Naive thymus-derived CD4-positive, alpha-beta T cell (primary cell): ENCODE measurements at regions of chr13 and their contacts with region 1.

Region 1: DNA sequence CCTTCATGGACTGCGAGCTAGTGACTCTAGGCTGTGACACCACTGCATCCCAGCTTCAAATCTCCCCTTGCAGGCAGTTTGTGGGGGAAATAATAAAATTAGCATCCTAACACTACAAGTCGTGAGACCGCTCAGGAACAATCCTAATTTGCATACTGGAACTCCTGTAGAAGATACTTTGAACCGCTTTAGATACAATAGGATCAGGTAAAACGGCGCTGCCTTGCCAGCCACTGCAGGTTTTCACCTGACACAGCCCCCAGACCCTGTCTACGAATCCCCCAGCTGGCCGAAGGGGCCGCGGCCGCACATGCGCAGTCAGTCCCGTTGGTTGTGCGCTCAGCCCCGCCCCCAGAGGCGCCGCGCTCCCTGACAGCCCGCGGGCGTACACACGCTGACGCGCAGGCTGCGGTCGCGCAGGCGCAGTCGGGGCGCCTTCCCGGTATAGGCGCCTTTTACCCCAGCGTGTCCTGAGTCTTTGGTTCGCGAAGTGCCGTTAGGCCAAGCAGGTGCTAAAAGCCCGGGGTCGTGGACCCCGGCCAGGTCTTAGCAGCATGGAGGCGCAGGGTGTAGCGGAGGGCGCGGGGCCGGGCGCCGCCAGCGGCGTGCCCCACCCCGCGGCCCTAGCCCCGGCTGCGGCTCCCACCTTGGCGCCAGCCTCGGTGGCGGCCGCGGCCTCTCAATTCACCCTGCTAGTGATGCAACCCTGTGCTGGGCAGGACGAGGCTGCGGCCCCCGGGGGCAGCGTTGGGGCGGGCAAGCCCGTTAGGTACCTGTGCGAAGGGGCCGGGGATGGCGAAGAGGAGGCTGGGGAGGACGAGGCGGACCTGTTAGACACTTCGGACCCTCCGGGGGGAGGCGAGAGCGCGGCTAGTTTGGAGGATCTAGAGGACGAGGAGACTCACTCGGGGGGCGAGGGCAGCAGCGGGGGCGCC is at the start of gene RFXAP:
- DNase-seq: peak; percentile 84 to 95 (median 92)
- ATAC-seq: peak; percentile 96
- H3K4me3 ChIP-seq: peak within 1 kb of the TSS; percentile 86
- H3K4me3 Mint-ChIP-seq: peak within 1 kb of the TSS; percentile 90 to 98 (median 92)
- H3K27ac ChIP-seq: peak within 1 kb of the TSS; percentile 93
- H3K27ac Mint-ChIP-seq: peak within 1 kb of the TSS; percentile 70 to 96 (median 94)
- H3K4me1 ChIP-seq: peaks cover 11 to 12% of the 10 kb centered on the region in 2 donors
- H3K4me1 Mint-ChIP-seq: peaks cover 29 to 60% (median 54%) of the 10 kb centered on the region in 7 donors
- H3K27me3 ChIP-seq: no peaks in the 10 kb centered on the region
- H3K27me3 Mint-ChIP-seq: peaks cover 0 to 17% (median 6%) of the 10 kb centered on the region in 5 donors
- total RNA-seq, gene RFXAP: 4.9 to 12.7 (median 12.0) TPM

Region 2: GRCh38 chr13:35866801-35867200 is 952.3 kb before region 1 on chr13:
- CTCF ChIA-PET with region 1: no interaction called
- POLR2A ChIA-PET with region 1: no interaction called
- intact Hi-C with region 1: no loop called
- DNase-seq: no peak
- ATAC-seq: no peak
- H3K4me3 ChIP-seq: no peak overlapping the region
- H3K4me3 Mint-ChIP-seq: no peak overlapping the region
- H3K27ac ChIP-seq: no peak overlapping the region
- H3K27ac Mint-ChIP-seq: no peak overlapping the region
- H3K4me1 ChIP-seq: no peaks in the 10 kb centered on the region
- H3K4me1 Mint-ChIP-seq: no peaks in the 10 kb centered on the region
- H3K27me3 ChIP-seq: no peaks in the 10 kb centered on the region
- H3K27me3 Mint-ChIP-seq: no peaks in the 10 kb centered on the region

Region 3: DNA sequence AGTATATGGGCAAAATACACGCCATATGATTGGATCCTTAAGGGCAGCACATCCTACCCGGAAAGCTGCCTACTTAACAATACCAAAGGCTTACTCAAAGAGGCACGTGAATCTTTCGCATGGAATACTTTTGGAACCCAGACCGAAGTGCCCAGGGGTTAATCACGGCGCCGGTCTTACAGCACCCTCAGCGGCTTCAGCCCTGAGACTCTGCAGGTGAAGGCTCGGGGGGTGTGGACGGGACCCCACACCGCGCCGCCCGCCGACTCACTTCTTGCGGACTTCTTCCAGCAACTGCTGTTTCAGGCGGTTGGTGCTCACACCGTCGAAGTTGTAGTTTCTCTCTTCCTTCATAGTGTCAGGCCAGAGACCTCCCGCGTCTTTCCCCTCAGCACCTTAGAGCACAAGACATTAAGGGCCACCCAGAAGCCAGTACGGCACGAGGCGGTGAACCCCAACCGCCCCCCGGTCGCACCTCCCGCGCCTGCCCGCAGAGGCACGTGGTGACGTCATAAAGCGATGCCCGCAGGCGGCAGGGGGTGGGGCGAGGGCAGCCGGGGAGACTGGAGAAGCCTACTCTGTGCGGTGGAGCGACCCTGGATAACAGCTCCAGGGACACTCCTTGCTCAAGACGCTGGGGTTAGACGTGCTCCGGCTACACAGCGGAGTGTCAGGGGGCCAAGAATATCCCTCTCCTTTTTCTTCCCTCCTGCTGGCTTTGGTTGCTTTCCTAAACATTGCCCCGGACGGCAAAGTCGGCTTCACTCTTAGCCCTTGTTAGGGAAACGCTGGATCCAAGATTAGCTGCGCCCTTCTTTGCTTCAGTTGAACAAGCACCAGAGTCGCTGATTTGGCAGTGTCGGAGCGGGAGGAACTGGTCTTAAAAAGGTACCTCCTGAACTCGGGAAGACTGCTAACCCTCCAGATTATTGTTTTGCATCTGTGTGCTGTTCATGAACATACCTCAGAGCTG is 521.4 kb before region 1 on chr13 and contains the start of gene CCDC169:
- CTCF ChIA-PET with region 1: no interaction called
- POLR2A ChIA-PET with region 1: no interaction called
- intact Hi-C with region 1: loop called in 1 of 2 experiments (anchors 1 kb)
- DNase-seq: peak; percentile 42 to 76 (median 58)
- ATAC-seq: peak; percentile 91
- H3K4me3 ChIP-seq: peak within 1 kb of the TSS; percentile 55
- H3K4me3 Mint-ChIP-seq: peak within 1 kb of the TSS; percentile 81 to 92 (median 88)
- H3K27ac ChIP-seq: no peak within 1 kb of the TSS
- H3K27ac Mint-ChIP-seq: peak within 1 kb of the TSS in 5 of 9 donors; percentile 28 to 80 (median 34)
- H3K4me1 ChIP-seq: no peaks in the 10 kb centered on the region
- H3K4me1 Mint-ChIP-seq: peaks cover 4 to 18% (median 13%) of the 10 kb centered on the region in 7 donors
- H3K27me3 ChIP-seq: no peaks in the 10 kb centered on the region
- H3K27me3 Mint-ChIP-seq: peaks cover 17 to 45% (median 41%) of the 10 kb centered on the region in 5 donors
- total RNA-seq, gene CCDC169: 0.41 to 0.42 TPM in 2 of 5 experiments, not detected in the others

Region 4: DNA sequence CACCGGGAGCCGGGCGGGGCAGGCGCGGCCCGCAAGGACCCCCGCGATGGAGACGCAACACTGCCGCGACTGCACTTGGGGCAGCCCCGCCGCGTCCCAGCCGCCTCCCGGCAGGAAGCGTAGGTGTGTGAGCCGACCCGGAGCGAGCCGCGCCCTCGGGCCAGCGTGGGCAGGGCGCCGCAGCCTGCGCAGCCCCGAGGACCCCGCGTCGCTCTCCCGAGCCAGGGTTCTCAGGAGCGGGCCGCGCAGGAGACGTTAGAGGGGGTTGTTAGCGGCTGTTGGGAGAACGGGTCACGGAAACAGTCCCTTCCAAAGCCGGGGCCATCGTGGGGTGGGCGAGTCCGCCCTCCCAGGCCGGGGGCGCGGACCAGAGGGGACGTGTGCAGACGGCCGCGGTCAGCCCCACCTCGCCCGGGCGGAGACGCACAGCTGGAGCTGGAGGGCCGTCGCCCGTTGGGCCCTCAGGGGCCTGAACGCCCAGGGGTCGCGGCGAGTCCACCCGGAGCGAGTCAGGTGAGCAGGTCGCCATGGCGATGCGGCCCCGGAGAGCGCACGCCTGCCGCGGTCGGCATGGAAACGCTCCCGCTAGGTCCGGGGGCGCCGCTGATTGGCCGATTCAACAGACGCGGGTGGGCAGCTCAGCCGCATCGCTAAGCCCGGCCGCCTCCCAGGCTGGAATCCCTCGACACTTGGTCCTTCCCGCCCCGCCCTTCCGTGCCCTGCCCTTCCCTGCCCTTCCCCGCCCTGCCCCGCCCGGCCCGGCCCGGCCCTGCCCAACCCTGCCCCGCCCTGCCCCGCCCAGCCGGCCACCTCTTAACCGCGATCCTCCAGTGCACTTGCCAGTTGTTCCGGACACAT is 387.2 kb before region 1 on chr13 and contains the start of gene CCNA1:
- CTCF ChIA-PET with region 1: no interaction called
- POLR2A ChIA-PET with region 1: no interaction called
- intact Hi-C with region 1: loop called in 1 of 2 experiments (anchors 5 kb)
- DNase-seq: peak in 1 of 9 donors; percentile 67
- ATAC-seq: peak; percentile 21
- H3K4me3 ChIP-seq: no peak within 1 kb of the TSS
- H3K4me3 Mint-ChIP-seq: peak within 1 kb of the TSS; percentile 51 to 73 (median 67)
- H3K27ac ChIP-seq: no peak within 1 kb of the TSS
- H3K27ac Mint-ChIP-seq: peak within 1 kb of the TSS in 1 of 9 donors; percentile 68
- H3K4me1 ChIP-seq: no peaks in the 10 kb centered on the region
- H3K4me1 Mint-ChIP-seq: peaks cover 0 to 29% (median 15%) of the 10 kb centered on the region in 7 donors
- H3K27me3 ChIP-seq: peaks cover 0 to 15% of the 10 kb centered on the region in 2 donors
- H3K27me3 Mint-ChIP-seq: peaks cover 62 to 79% (median 72%) of the 10 kb centered on the region in 5 donors
- total RNA-seq, gene CCNA1: 0.22 to 5.0 (median 0.69) TPM in 3 of 5 experiments, not detected in the others

Region 5: DNA sequence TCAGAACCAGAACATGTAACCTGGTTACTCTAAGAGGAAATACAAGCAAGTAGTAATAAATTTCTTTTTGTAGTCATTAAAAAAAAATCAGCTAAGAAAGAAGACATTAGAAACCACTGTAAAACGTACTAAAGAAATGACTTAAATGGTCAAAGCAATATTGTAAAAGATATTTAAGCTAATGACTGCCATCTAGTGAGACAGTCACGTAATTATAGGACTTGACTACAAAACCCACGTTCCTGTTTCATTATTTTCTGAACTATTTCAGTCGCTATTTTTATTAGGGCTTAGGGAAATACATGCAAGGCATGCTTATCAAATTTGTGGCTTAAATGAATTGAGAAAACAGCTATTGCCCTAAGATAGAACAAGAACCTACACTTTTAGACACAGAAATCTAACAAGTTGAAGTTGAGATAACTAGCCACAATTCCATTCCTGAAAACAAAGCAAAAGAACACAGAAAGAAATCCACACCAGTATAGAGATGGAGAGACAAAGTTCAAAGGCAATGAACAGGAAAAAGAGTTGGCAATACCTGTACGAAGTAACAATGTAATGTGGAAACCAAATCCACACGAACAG is 162.2 kb after region 1 on chr13:
- CTCF ChIA-PET with region 1: no interaction called
- POLR2A ChIA-PET with region 1: no interaction called
- intact Hi-C with region 1: loop called in 1 of 2 experiments (anchors 5 kb)
- DNase-seq: peak in 3 of 9 donors; percentile 2 to 18 (median 5)
- ATAC-seq: peak; percentile 49
- H3K4me3 ChIP-seq: no peak overlapping the region
- H3K4me3 Mint-ChIP-seq: no peak overlapping the region
- H3K27ac ChIP-seq: no peak overlapping the region
- H3K27ac Mint-ChIP-seq: peak overlapping the region in 1 of 9 donors; percentile 10
- H3K4me1 ChIP-seq: no peaks in the 10 kb centered on the region
- H3K4me1 Mint-ChIP-seq: peaks cover 0 to 15% (median 2%) of the 10 kb centered on the region in 7 donors
- H3K27me3 ChIP-seq: no peaks in the 10 kb centered on the region
- H3K27me3 Mint-ChIP-seq: no peaks in the 10 kb centered on the region

Region 6: DNA sequence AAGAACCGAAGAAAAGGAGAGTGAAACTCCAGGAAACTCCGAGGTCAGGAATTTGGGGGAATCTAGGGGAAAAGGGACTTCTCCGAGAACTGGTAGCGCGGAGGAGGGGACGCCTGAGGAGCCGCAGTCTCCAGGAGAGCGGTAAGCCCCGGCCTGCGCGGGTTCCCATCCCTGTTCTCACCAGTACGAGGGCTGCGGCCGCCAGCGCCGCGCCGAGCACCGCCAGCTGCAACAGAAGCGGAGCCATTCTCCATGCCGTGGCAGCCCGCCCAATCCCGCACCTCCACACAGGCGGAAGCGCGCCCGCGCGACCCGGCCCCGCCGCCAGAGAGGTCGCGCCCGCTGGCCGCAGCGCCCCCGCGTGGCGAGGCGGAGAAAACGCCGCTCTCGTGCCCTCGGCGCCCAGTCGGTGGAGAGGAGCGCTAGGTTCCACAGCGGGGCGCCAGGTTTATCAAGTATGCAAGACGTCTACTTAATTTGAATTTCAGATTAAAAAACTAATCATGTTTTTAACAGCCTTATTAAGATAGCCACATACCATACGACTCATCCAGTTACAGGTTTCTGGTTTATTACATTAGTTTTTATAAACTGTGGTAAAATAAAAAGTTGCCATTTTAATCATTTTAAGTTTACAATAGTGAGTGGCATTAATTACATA is 180.1 kb after region 1 on chr13 and contains the start of gene ALG5:
- CTCF ChIA-PET with region 1: no interaction called
- POLR2A ChIA-PET with region 1: interaction called, 12 read pairs
- intact Hi-C with region 1: loop called (anchors 1 kb)
- DNase-seq: peak; percentile 91 to 99 (median 96)
- ATAC-seq: peak; percentile 85
- H3K4me3 ChIP-seq: peak within 1 kb of the TSS; percentile 77
- H3K4me3 Mint-ChIP-seq: peak within 1 kb of the TSS; percentile 90 to 100 (median 98)
- H3K27ac ChIP-seq: peak within 1 kb of the TSS; percentile 89
- H3K27ac Mint-ChIP-seq: peak within 1 kb of the TSS; percentile 98 to 100 (median 100)
- H3K4me1 ChIP-seq: peaks cover 12 to 21% of the 10 kb centered on the region in 2 donors
- H3K4me1 Mint-ChIP-seq: peaks cover 23 to 54% (median 46%) of the 10 kb centered on the region in 7 donors
- H3K27me3 ChIP-seq: no peaks in the 10 kb centered on the region
- H3K27me3 Mint-ChIP-seq: peaks cover 0 to 7% (median 0%) of the 10 kb centered on the region in 5 donors
- total RNA-seq, gene ALG5: 12.1 to 39.3 (median 22.8) TPM

Region 7: DNA sequence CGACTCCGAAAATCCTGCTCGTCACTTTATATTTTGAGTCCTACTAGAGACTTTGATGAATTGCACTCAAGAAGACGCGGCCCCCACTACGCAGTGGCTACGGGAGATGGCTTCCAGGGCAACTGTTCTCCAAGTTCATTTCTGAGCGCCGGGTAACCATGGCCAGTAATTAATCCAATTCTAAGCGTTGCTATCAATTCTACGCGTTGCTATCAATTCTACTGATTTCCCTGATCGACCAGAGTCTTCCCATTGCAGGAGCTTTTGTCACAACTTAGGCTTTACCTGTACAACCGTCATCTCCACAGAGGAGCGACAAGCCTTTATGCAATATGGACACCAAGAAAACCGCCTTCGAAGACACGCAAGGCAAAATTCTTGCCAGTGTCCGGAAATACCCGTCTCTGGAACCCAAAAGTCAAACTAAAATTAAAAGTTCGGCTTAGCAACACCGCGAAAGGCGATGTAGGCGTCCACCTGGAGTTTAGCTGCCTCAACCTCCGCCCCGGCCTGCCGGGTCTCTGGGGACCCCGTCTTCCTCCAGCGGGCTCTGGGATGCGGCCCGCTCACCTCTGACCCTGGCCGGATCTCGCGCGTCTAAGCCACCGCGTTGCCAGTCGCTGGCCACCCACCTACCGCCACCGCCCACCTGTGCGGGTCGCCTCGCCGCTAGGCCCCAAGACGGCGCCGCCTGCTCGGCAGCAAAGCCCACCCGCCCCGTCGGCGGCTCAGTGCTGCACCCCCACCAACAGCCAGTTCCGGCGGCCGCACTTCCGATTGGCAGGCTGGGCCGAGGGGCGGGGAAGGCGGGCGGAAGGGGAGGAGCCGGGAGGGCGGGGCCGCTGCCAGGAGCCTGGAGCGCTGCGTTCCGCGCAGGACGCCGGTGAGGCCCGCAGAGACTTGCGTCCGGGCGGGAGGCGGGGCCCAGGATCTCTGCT is 240.1 kb after region 1 on chr13 and contains the start of gene SUPT20H:
- CTCF ChIA-PET with region 1: no interaction called
- POLR2A ChIA-PET with region 1: no interaction called
- intact Hi-C with region 1: loop called (anchors 1 kb)
- DNase-seq: peak; percentile 85 to 94 (median 91)
- ATAC-seq: peak; percentile 98
- H3K4me3 ChIP-seq: peak within 1 kb of the TSS; percentile 77
- H3K4me3 Mint-ChIP-seq: peak within 1 kb of the TSS; percentile 87 to 99 (median 94)
- H3K27ac ChIP-seq: peak within 1 kb of the TSS; percentile 93
- H3K27ac Mint-ChIP-seq: peak within 1 kb of the TSS; percentile 93 to 99 (median 98)
- H3K4me1 ChIP-seq: peaks cover 13 to 15% of the 10 kb centered on the region in 2 donors
- H3K4me1 Mint-ChIP-seq: peaks cover 13 to 59% (median 50%) of the 10 kb centered on the region in 7 donors
- H3K27me3 ChIP-seq: no peaks in the 10 kb centered on the region
- H3K27me3 Mint-ChIP-seq: peaks cover 0 to 10% (median 0%) of the 10 kb centered on the region in 5 donors
- total RNA-seq, gene SUPT20H: 70.5 to 106 (median 86.1) TPM

Region 8: GRCh38 chr13:38349390-38350113 is 1530.5 kb after region 1 on chr13 and contains the start of gene UFM1:
- CTCF ChIA-PET with region 1: no interaction called
- POLR2A ChIA-PET with region 1: no interaction called
- intact Hi-C with region 1: loop called (anchors 1 kb)
- DNase-seq: peak; percentile 62 to 94 (median 88)
- ATAC-seq: peak; percentile 97
- H3K4me3 ChIP-seq: peak within 1 kb of the TSS; percentile 98
- H3K4me3 Mint-ChIP-seq: peak within 1 kb of the TSS; percentile 89 to 100 (median 97)
- H3K27ac ChIP-seq: peak within 1 kb of the TSS; percentile 89
- H3K27ac Mint-ChIP-seq: peak within 1 kb of the TSS; percentile 92 to 100 (median 97)
- H3K4me1 ChIP-seq: peaks cover 20% of the 10 kb centered on the region in 2 donors
- H3K4me1 Mint-ChIP-seq: peaks cover 23 to 52% (median 40%) of the 10 kb centered on the region in 7 donors
- H3K27me3 ChIP-seq: no peaks in the 10 kb centered on the region
- H3K27me3 Mint-ChIP-seq: peaks cover 0 to 1% (median 0%) of the 10 kb centered on the region in 5 donors
- total RNA-seq, gene UFM1: 57.5 to 75.5 (median 65.2) TPM